KBM-7 (cell line): ENCODE measurements at regions of chr5 and their contacts with region 1.

Region 1: GRCh38 chr5:59810041-59810440 is 83.5 kb downstream of the PDE4D start:
- DNase-seq: peak; percentile 69

Region 2: GRCh38 chr5:60287174-60287771 is 477.2 kb after region 1 on chr5:
- in situ Hi-C with region 1: loop called (anchors 25 kb)
- DNase-seq: peak; percentile 83

Region 3: DNA sequence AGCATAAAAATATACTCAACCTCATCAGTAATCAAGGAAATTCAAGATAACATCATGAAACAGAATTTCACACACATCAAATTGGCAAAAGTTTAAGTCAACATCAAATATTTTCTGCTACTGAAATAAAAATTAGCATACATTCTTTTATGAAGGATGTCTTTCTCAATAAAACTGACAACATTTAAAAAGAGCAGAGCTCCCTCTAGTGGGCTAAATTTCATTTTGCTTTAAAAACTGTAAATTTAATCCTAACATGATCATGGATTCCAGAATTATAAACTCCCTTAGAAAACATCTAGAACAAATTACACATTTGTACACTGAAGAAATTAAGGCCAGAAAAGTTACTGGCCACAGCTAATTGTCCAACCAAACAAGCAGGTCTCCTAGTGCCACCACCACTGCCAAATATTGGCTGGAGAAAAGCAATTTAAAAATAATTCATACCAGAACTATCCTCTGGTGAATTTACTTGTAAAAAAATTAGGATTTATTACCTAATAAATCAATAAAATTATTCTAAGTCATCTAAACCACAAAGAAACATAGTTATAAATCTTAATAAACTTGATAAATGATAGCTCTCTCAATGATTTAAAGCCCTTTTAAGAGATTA is 858.8 kb after region 1 on chr5:
- in situ Hi-C with region 1: loop called (anchors 25 kb)
- DNase-seq: peak; percentile 65